Gastrocnemius medialis (tissue), 4 donors: ENCODE measurements at regions of chr1 and their contacts with region 1.

Region 1: GRCh38 chr1:207963427-207964194 is 52.7 kb upstream of the CD34 start:
- DNase-seq: peak; percentile 71 to 87
- ATAC-seq: peak; percentile 53 to 68
- H3K4me3 ChIP-seq: peak overlapping the region; percentile 61 to 95 (median 67)
- H3K27ac ChIP-seq: peak overlapping the region; percentile 86 to 97 (median 94)
- H3K4me1 ChIP-seq: peaks cover 34 to 47% of the 10 kb centered on the region in 2 donors
- H3K27me3 ChIP-seq: no peaks in the 10 kb centered on the region
- CTCF ChIP-seq: peak; percentile 92 to 100 (median 100)
- POLR2A ChIP-seq: peak; percentile 70 to 75

Region 2: DNA sequence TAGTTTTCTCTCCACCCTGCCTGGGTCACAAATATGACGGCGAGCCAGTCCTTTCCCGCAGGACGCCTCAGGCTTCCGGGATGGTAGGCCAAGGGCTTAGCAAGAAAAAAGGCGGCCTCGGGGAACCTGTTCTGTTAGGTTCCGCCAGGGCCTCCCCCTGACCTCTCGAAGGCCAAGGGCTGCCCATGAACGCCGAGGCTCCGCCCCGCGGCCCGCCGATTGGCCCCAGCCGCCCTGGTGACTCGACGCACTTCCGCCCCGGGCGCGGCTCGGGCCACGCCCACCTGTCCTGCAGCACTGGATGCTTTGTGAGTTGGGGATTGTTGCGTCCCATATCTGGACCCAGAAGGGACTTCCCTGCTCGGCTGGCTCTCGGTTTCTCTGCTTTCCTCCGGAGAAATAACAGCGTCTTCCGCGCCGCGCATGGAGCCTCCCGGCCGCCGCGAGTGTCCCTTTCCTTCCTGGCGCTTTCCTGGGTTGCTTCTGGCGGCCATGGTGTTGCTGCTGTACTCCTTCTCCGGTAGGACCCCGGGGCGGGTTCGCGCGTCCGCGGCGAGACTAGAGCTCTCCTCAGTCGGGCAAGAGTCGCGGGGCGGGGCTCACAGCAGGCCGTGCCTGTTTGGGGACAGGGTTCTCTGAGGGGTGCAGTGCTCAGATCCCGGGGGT is 211.7 kb before region 1 on chr1 and contains the start of gene CD46:
- in situ Hi-C with region 1: no loop called
- intact Hi-C with region 1: loop called (anchors 5 kb)
- DNase-seq: peak; percentile 95 to 96
- ATAC-seq: peak; percentile 90 to 91
- H3K4me3 ChIP-seq: peak within 1 kb of the TSS; percentile 83 to 98 (median 91)
- H3K27ac ChIP-seq: peak within 1 kb of the TSS; percentile 90 to 97 (median 92)
- H3K4me1 ChIP-seq: peaks cover 47 to 48% of the 10 kb centered on the region in 2 donors
- H3K27me3 ChIP-seq: no peaks in the 10 kb centered on the region
- CTCF ChIP-seq: peak in 3 of 5 experiments; percentile 10 to 25 (median 13)
- POLR2A ChIP-seq: peak; percentile 80 to 91
- total RNA-seq, gene CD46: 42.1 to 101 (median 80.2) TPM

Region 3: DNA sequence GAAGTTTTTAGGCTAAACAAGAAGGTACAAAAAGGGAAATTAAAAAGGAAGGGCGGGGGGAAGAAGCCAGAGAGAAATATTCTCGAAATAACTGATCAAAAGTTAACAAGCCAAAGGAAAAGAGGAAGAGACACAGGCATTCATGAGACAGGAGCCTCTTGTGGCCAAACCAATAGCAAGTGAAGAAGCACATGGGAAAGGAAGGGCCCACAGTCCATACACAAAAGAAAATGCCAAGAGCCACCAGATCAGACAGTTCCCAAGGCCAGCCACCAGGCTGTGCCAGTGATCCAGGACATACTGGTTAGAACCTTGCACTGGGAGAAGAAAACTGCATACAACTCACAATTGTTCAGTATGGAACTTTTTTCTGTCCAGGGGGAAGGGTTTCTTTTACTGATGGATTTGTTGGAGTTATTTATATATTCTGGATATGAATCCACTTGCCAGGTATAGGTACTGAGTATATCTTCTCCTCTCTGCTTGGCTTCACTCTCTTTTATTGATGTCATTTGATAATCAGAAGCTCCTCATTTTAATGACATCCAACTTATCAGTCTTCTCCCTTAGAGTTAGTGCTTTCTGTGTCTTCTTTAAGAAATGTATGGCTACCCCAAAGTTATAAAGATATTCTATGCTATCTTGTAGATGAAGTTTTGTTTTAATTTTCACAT is 135.0 kb before region 1 on chr1:
- in situ Hi-C with region 1: no loop called
- intact Hi-C with region 1: loop called (anchors 1 kb)
- DNase-seq: peak; percentile 78 to 90
- ATAC-seq: peak; percentile 30 to 36
- H3K4me3 ChIP-seq: no peak overlapping the region
- H3K27ac ChIP-seq: peak overlapping the region; percentile 96 to 100 (median 99)
- H3K4me1 ChIP-seq: peaks cover 78 to 94% of the 10 kb centered on the region in 2 donors
- H3K27me3 ChIP-seq: no peaks in the 10 kb centered on the region
- CTCF ChIP-seq: peak; percentile 90 to 98 (median 93)
- POLR2A ChIP-seq: no peak

Region 4: GRCh38 chr1:207885129-207886032 is 78.2 kb before region 1 on chr1:
- in situ Hi-C with region 1: loop called in 3 of 4 experiments (anchors 5 to 10 kb)
- intact Hi-C with region 1: loop called (anchors 1 kb)
- DNase-seq: peak; percentile 72 to 76
- ATAC-seq: peak; percentile 83 to 89
- H3K4me3 ChIP-seq: no peak overlapping the region
- H3K27ac ChIP-seq: peak overlapping the region; percentile 21 to 81 (median 74)
- H3K4me1 ChIP-seq: peaks cover 42 to 55% of the 10 kb centered on the region in 2 donors
- H3K27me3 ChIP-seq: no peaks in the 10 kb centered on the region
- CTCF ChIP-seq: peak; percentile 95 to 98 (median 97)
- POLR2A ChIP-seq: no peak

Region 5: GRCh38 chr1:207897188-207897587 is 66.4 kb before region 1 on chr1:
- in situ Hi-C with region 1: loop called in 3 of 4 experiments (anchors 5 to 10 kb)
- intact Hi-C with region 1: loop called (anchors 1 kb)
- DNase-seq: no peak
- ATAC-seq: peak in 1 of 2 donors; percentile 44
- H3K4me3 ChIP-seq: no peak overlapping the region
- H3K27ac ChIP-seq: peak overlapping the region; percentile 25 to 59 (median 42)
- H3K4me1 ChIP-seq: peaks cover under 1 to 6% of the 10 kb centered on the region in 2 donors
- H3K27me3 ChIP-seq: no peaks in the 10 kb centered on the region
- CTCF ChIP-seq: peak; percentile 30 to 50 (median 43)
- POLR2A ChIP-seq: no peak

Region 6: DNA sequence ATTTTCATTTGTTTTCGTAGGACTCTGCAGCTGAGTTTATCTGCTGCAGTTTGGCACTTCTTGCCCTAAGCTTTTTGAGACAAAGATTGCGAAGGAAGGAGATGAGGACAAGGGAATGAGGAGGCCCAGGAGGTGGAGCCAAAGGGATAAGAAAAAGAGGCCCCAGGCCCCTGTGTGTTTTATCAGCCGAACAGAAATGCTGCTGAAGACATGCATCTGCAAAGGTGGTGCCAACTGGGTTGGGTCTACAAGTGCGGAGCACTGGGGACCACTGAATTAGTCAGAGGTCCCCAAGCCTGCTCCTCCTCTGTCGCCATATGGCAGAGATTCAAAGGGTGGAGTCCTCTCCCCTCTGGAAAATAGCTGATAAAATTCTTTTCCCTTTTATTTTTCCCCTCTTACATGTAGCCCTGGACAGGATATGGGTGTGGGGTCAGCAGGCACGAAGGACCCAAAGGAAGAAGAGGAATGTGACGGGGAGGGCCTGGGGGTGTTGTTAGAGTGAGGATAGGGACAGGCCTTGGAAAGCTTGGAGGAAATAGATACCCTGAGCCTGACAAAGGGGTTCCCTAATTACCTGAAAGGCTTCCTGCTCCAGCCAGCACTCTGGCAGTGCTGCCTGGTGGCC is 55.4 kb before region 1 on chr1:
- in situ Hi-C with region 1: loop called in 3 of 4 experiments (anchors 5 to 10 kb)
- intact Hi-C with region 1: no loop called
- DNase-seq: peak in 1 of 2 donors; percentile 46
- ATAC-seq: peak; percentile 22 to 52
- H3K4me3 ChIP-seq: peak overlapping the region; percentile 55 to 62 (median 59)
- H3K27ac ChIP-seq: peak overlapping the region; percentile 70 to 79 (median 74)
- H3K4me1 ChIP-seq: peaks cover 0 to 10% of the 10 kb centered on the region in 2 donors
- H3K27me3 ChIP-seq: peaks cover 0 to 20% (median 11%) of the 10 kb centered on the region in 3 donors
- CTCF ChIP-seq: peak in 1 of 5 experiments; percentile 23
- POLR2A ChIP-seq: no peak